ENCODE measurements at regions of chr15 and their contacts with region 1.

Region 1: DNA sequence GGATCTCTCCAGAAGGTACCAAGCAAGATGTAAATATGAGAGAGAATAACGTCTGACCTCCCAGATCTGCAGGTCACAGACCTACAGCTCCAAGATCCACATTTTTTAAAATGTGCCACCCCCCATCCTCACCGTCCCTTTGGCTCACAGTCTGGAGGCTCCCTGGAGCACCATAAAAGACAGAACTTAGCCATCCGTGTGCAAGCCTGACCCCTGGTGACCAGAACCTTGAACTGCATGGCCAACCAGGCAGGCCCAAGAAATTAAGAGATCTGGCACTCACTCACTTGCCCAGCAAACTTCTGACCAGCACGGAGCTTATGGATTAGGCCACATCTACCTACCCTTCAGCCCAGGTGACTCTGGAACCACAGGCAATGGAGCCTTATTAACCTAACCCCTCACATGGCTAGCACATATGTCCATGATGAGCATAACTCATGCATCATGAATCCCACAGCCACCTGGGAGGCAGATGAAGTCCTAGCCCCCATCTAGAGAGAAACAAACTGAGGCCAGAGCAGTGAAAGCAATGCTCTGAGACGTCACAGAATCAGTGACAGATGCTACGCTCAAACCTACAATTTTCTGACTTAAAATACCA is 275.3 kb downstream of the UACA start:
- DNase-seq: peak; percentile 51 to 86 (median 67)
- ATAC-seq: no peak
- H3K4me3 ChIP-seq: no peak overlapping the region
- H3K4me3 Mint-ChIP-seq: no peak overlapping the region
- H3K27ac ChIP-seq: no peak overlapping the region
- H3K27ac Mint-ChIP-seq: no peak overlapping the region
- H3K4me1 ChIP-seq: peaks cover 63% of the 10 kb centered on the region
- H3K4me1 Mint-ChIP-seq: peaks cover 61% of the 10 kb centered on the region
- H3K27me3 ChIP-seq: peaks cover 0 to 4% of the 10 kb centered on the region in 2 experiments
- H3K27me3 Mint-ChIP-seq: no peaks in the 10 kb centered on the region
- CTCF ChIP-seq: peak; percentile 92

Region 2: GRCh38 chr15:69468241-69469121 is 1019.6 kb before region 1 on chr15:
- CTCF ChIA-PET with region 1: no interaction called
- POLR2A ChIA-PET with region 1: interaction called, 7 read pairs
- intact Hi-C with region 1: loop called in 1 of 2 experiments (anchors 2 kb)
- DNase-seq: peak; percentile 74 to 97 (median 81)
- ATAC-seq: peak; percentile 88
- H3K4me3 ChIP-seq: peak overlapping the region; percentile 15
- H3K4me3 Mint-ChIP-seq: peak overlapping the region; percentile 70
- H3K27ac ChIP-seq: peak overlapping the region; percentile 91
- H3K27ac Mint-ChIP-seq: peak overlapping the region; percentile 90
- H3K4me1 ChIP-seq: peaks cover 39% of the 10 kb centered on the region
- H3K4me1 Mint-ChIP-seq: peaks cover 29% of the 10 kb centered on the region
- H3K27me3 ChIP-seq: no peaks in the 10 kb centered on the region
- H3K27me3 Mint-ChIP-seq: no peaks in the 10 kb centered on the region
- CTCF ChIP-seq: no peak

Region 3: DNA sequence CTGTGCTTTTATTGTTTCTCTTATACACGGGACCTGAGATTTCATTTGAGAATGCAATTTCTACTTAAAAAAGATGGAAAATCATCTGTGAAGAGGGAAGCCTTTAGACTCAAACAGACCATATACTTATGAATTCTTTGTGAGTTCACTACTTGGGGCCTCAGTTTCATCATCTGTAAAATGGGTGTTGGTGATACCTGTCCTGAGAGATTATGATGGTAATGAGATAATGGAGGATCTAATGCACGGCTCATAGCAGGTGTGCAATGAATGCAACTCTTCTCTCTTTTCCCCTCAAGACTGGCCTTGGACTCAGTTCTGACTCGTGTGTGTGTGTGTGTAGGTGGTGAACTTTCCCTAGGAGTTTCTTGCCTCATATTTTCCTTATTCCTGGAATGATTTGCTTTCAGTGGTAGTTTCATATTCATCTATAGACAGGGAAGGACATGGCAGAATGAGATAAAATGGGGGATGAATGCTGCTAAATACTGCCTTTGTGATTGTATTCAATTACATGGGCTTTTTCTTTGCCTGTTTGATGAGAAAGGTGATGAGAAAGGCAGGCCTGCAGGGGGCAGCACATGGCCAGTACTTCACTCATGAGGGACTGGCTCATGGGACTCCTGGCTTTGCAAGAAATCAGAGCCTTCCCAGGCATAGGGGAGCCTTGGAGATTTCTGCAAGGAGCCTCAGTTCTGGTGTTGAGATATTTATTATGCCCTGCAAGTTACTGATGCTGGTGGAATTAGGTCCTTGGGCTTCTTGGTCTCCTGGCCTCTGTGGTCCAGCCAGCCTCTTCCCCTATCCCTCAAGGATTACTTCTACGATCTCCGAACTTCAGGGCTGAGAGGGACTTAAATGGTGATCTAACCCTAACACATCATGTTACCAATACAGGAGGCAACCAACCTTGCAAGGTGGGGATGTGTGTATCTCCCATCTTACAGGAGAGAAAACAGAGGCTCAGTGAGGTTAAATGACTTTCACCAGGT is 964.8 kb before region 1 on chr15:
- CTCF ChIA-PET with region 1: no interaction called
- POLR2A ChIA-PET with region 1: no interaction called
- intact Hi-C with region 1: loop called in 1 of 2 experiments (anchors 2 kb)
- DNase-seq: peak; percentile 48 to 76 (median 61)
- ATAC-seq: no peak
- H3K4me3 ChIP-seq: no peak overlapping the region
- H3K4me3 Mint-ChIP-seq: no peak overlapping the region
- H3K27ac ChIP-seq: no peak overlapping the region
- H3K27ac Mint-ChIP-seq: no peak overlapping the region
- H3K4me1 ChIP-seq: no peaks in the 10 kb centered on the region
- H3K4me1 Mint-ChIP-seq: no peaks in the 10 kb centered on the region
- H3K27me3 ChIP-seq: peaks cover 0 to 1% of the 10 kb centered on the region in 2 experiments
- H3K27me3 Mint-ChIP-seq: peaks cover 4% of the 10 kb centered on the region
- CTCF ChIP-seq: peak; percentile 53

Region 4: DNA sequence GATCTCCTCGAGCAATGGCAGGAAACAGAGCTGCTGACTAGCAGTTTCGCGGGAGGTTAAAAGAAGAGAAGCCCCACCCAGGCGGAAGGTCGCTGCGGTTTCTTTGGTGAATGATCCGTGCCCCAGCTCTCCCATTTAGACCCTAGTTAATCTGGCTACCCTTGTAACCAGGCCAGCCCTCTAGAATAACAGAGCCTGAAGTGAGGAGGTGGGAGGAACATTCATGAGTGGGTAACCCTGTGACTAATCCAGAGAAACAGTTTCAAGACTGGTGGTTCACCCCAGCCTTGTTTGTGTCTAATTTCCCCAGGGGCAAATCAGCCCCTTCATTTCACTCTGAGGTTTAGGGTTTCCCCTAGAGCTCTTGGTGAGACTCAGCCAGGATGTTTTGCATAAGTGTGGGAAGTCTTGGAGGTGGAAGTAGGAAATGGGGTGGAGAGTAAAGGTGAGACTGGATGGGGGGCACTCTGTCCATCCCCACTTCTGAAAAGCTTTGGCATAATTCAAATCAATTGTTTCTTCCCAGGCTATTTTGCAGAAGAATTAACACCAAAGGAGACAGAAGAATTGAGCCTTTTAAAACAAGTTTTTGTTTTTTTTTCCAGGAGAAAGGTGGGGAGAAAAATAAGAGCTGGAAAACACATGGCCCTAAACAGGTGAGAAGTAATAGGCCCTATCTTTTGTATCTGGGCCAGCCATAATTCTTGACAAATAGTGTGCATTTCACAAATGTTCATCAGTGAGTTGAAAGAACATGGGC is 732.4 kb before region 1 on chr15:
- CTCF ChIA-PET with region 1: interaction called, 3 read pairs
- POLR2A ChIA-PET with region 1: interaction called, 7 read pairs
- intact Hi-C with region 1: loop called (anchors 5 to 10 kb)
- DNase-seq: peak; percentile 29 to 88 (median 68)
- ATAC-seq: peak; percentile 57
- H3K4me3 ChIP-seq: peak overlapping the region; percentile 15
- H3K4me3 Mint-ChIP-seq: peak overlapping the region; percentile 73
- H3K27ac ChIP-seq: no peak overlapping the region
- H3K27ac Mint-ChIP-seq: peak overlapping the region; percentile 77
- H3K4me1 ChIP-seq: peaks cover 71% of the 10 kb centered on the region
- H3K4me1 Mint-ChIP-seq: peaks cover 94% of the 10 kb centered on the region
- H3K27me3 ChIP-seq: no peaks in the 10 kb centered on the region
- H3K27me3 Mint-ChIP-seq: peaks cover 6% of the 10 kb centered on the region
- CTCF ChIP-seq: no peak

Region 5: DNA sequence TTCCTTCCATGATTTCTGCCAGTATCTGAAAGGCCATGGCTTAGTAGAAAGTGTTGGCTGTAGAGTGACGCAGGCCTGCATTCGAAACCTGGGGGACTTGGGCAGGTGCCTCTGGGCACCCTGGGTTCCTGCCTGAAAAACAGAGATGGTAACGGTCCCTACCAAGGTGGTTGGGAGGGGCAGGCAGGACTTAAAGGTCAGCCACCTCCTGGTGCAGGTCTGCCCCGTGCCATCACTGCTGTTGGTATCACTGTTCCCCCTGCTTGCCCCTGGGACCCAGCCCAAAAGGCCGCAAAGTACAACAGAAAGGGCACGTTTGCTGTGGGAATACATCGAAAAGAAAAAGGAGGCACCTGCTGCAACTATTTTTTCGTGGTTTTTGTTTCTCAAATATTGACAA is 42.8 kb before region 1 on chr15:
- CTCF ChIA-PET with region 1: no interaction called
- POLR2A ChIA-PET with region 1: no interaction called
- intact Hi-C with region 1: no loop called
- DNase-seq: no peak
- ATAC-seq: no peak
- H3K4me3 ChIP-seq: no peak overlapping the region
- H3K4me3 Mint-ChIP-seq: no peak overlapping the region
- H3K27ac ChIP-seq: no peak overlapping the region
- H3K27ac Mint-ChIP-seq: no peak overlapping the region
- H3K4me1 ChIP-seq: peaks cover 23% of the 10 kb centered on the region
- H3K4me1 Mint-ChIP-seq: peaks cover 22% of the 10 kb centered on the region
- H3K27me3 ChIP-seq: peaks cover 4 to 12% of the 10 kb centered on the region in 2 experiments
- H3K27me3 Mint-ChIP-seq: peaks cover 32% of the 10 kb centered on the region
- CTCF ChIP-seq: no peak

Region 6: GRCh38 chr15:70504299-70504951 is 16.3 kb after region 1 on chr15:
- CTCF ChIA-PET with region 1: interaction called, 3 read pairs
- POLR2A ChIA-PET with region 1: interaction called, 55 read pairs
- intact Hi-C with region 1: no loop called
- DNase-seq: peak in 5 of 14 experiments; percentile 10 to 71 (median 54)
- ATAC-seq: peak; percentile 27
- H3K4me3 ChIP-seq: no peak overlapping the region
- H3K4me3 Mint-ChIP-seq: peak overlapping the region; percentile 48
- H3K27ac ChIP-seq: no peak overlapping the region
- H3K27ac Mint-ChIP-seq: no peak overlapping the region
- H3K4me1 ChIP-seq: peaks cover 70% of the 10 kb centered on the region
- H3K4me1 Mint-ChIP-seq: peaks cover 70% of the 10 kb centered on the region
- H3K27me3 ChIP-seq: no peaks in the 10 kb centered on the region
- H3K27me3 Mint-ChIP-seq: no peaks in the 10 kb centered on the region
- CTCF ChIP-seq: no peak

Region 7: DNA sequence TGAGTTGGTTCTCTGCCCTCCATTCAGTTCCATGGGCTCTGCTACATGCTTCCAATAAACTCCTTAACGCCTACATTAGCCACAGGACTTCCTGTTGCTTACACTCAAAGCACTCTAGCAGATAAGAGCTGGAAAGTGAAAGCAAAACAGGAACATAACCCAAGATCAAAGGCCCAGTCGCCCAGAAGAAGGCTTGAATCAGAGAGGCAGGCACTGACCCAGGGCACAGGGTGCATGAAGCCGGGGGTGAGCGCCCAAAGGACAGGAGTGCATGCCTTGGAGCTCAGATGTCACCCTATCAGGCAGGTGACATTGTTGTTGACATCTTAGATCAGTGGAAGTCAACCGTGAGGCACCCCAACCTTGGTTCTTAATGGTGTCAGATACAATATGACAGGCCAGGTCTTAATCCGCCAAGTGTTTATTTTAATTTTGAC is 40.2 kb after region 1 on chr15:
- CTCF ChIA-PET with region 1: no interaction called
- POLR2A ChIA-PET with region 1: interaction called, 33 read pairs
- intact Hi-C with region 1: loop called (anchors 2 kb)
- DNase-seq: peak; percentile 33 to 91 (median 44)
- ATAC-seq: peak; percentile 89
- H3K4me3 ChIP-seq: peak overlapping the region; percentile 24
- H3K4me3 Mint-ChIP-seq: peak overlapping the region; percentile 71
- H3K27ac ChIP-seq: peak overlapping the region; percentile 14 to 66
- H3K27ac Mint-ChIP-seq: peak overlapping the region; percentile 89
- H3K4me1 ChIP-seq: peaks cover 71% of the 10 kb centered on the region
- H3K4me1 Mint-ChIP-seq: peaks cover 83% of the 10 kb centered on the region
- H3K27me3 ChIP-seq: no peaks in the 10 kb centered on the region
- H3K27me3 Mint-ChIP-seq: no peaks in the 10 kb centered on the region
- CTCF ChIP-seq: no peak

Region 8: DNA sequence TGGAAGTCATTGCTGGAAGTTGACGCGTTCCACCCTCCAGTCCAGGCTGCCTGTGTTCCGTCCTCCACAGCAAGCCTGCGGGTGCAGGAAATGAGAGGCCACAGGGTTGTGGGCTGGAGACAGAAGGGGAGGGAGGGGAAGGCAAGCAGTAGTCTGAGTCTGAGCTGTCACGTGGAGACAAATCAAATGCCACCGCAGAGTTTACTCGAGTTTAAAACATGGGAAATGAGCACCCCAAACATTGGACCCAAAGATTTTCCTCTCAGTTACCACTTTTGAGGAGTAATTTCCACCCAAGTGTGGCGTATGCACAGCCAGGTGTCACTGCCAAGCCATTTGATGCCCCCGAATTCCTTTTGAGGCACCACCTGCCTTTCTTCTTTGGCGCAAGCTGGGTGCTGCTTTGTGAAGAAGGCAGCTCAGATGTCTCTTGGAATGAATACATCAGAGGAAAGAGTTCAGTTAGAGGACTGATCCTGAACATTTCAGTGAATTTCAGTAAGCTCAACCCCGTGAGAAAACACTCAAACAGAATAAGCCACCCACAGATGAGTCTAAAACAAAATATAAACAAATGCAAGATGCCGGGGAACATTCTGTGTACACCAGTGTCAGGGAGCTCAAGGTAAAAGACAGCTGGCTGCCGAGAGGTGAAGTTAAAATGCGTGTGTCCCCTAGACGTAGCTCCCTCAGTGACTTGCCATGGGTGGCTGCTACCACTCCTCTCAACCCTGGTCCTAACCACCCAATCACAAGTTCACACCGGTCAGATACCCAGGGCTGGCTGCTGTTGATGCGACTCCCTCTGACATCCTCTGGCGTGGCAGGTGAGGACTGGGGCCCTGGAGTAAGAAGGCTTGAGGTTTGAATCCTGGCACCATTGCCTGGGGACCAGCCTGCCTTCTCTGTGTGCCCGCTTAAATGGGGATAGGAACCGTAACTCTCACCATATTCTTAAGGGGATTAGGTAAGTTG is 71.4 kb after region 1 on chr15:
- CTCF ChIA-PET with region 1: interaction called, 3 read pairs
- POLR2A ChIA-PET with region 1: interaction called, 8 read pairs
- intact Hi-C with region 1: loop called (anchors 1 to 5 kb)
- DNase-seq: peak; percentile 56 to 87 (median 66)
- ATAC-seq: peak; percentile 82
- H3K4me3 ChIP-seq: peak overlapping the region; percentile 53
- H3K4me3 Mint-ChIP-seq: no peak overlapping the region
- H3K27ac ChIP-seq: peak overlapping the region; percentile 16 to 42
- H3K27ac Mint-ChIP-seq: no peak overlapping the region
- H3K4me1 ChIP-seq: peaks cover 69% of the 10 kb centered on the region
- H3K4me1 Mint-ChIP-seq: peaks cover 4% of the 10 kb centered on the region
- H3K27me3 ChIP-seq: no peaks in the 10 kb centered on the region
- H3K27me3 Mint-ChIP-seq: no peaks in the 10 kb centered on the region
- CTCF ChIP-seq: no peak

Measured in CD4-positive, alpha-beta T cell (primary cell).